CD8-positive, alpha-beta T cell (primary cell): ENCODE measurements at regions of chr3 and their contacts with region 1.

Region 1: DNA sequence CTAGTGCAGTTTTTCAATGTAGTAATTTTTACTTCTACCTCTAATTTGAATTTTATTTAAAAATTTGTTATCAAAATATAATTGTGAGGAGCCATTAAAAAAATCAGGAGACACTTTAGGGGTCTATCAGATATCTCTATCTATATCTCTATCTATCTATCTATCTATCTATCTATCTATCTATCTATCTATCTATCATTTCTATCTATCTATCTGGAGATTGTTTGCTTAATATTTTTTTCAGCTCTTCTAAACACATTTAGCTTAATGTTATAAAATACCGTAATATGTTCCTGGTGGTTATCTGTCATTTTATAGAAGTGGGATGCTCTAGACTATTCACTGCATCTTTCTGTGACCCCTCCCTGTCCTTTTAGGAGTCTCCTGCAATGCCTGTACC is 193.7 kb upstream of the P2RY1 start:
- DNase-seq: no peak
- ATAC-seq: no peak
- H3K4me3 ChIP-seq: no peak overlapping the region
- H3K4me3 Mint-ChIP-seq: no peak overlapping the region
- H3K27ac ChIP-seq: no peak overlapping the region
- H3K27ac Mint-ChIP-seq: no peak overlapping the region
- H3K4me1 ChIP-seq: no peaks in the 10 kb centered on the region
- H3K4me1 Mint-ChIP-seq: no peaks in the 10 kb centered on the region
- H3K27me3 ChIP-seq: no peaks in the 10 kb centered on the region
- H3K27me3 Mint-ChIP-seq: no peaks in the 10 kb centered on the region
- CTCF ChIP-seq: no peak

Region 2: GRCh38 chr3:152695840-152696239 is 54.6 kb after region 1 on chr3:
- CTCF ChIA-PET with region 1: no interaction called
- POLR2A ChIA-PET with region 1: no interaction called
- intact Hi-C with region 1: loop called in 1 of 2 experiments (anchors 2 kb)
- DNase-seq: no peak
- ATAC-seq: no peak
- H3K4me3 ChIP-seq: no peak overlapping the region
- H3K4me3 Mint-ChIP-seq: no peak overlapping the region
- H3K27ac ChIP-seq: no peak overlapping the region
- H3K27ac Mint-ChIP-seq: no peak overlapping the region
- H3K4me1 ChIP-seq: no peaks in the 10 kb centered on the region
- H3K4me1 Mint-ChIP-seq: no peaks in the 10 kb centered on the region
- H3K27me3 ChIP-seq: no peaks in the 10 kb centered on the region
- H3K27me3 Mint-ChIP-seq: no peaks in the 10 kb centered on the region
- CTCF ChIP-seq: no peak

Region 3: GRCh38 chr3:152825566-152825965 is 184.4 kb after region 1 on chr3:
- CTCF ChIA-PET with region 1: no interaction called
- POLR2A ChIA-PET with region 1: no interaction called
- intact Hi-C with region 1: no loop called
- DNase-seq: no peak
- ATAC-seq: no peak
- H3K4me3 ChIP-seq: no peak overlapping the region
- H3K4me3 Mint-ChIP-seq: no peak overlapping the region
- H3K27ac ChIP-seq: no peak overlapping the region
- H3K27ac Mint-ChIP-seq: no peak overlapping the region
- H3K4me1 ChIP-seq: no peaks in the 10 kb centered on the region
- H3K4me1 Mint-ChIP-seq: no peaks in the 10 kb centered on the region
- H3K27me3 ChIP-seq: peaks cover 0 to 2% of the 10 kb centered on the region in 2 experiments
- H3K27me3 Mint-ChIP-seq: no peaks in the 10 kb centered on the region
- CTCF ChIP-seq: no peak